Heart right ventricle (tissue), 16 donors: ENCODE measurements at regions of chr14 and their contacts with region 1.

Region 1: DNA sequence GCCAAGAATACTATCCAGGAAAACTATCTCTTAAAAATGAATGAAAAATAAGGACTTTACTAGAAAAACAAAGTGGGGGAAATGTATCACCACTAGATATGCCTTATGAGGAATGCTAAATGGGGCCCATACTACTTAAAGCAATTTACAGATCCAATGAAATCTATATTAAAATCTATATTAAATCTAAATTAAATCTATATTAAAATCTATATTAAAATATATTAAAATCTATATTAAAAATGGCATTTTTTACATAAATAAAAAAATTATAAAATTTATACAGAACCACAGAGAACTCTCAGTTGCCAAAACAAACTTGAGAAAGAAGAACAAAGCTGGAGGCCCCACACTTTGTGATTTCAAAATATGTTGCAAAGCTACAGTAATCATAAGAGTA is 234.5 kb downstream of the RPL10L start:
- DNase-seq: no peak
- ATAC-seq: no peak
- H3K4me3 ChIP-seq: no peak overlapping the region
- H3K27ac ChIP-seq: no peak overlapping the region
- H3K4me1 ChIP-seq: no peaks in the 10 kb centered on the region
- H3K27me3 ChIP-seq: no peaks in the 10 kb centered on the region
- CTCF ChIP-seq: no peak

Region 2: GRCh38 chr14:46384312-46385010 is 32.6 kb before region 1 on chr14:
- intact Hi-C with region 1: loop called in 1 of 10 experiments (anchors 2 kb)
- DNase-seq: no peak
- ATAC-seq: no peak
- H3K4me3 ChIP-seq: no peak overlapping the region
- H3K27ac ChIP-seq: no peak overlapping the region
- H3K4me1 ChIP-seq: no peaks in the 10 kb centered on the region
- H3K27me3 ChIP-seq: no peaks in the 10 kb centered on the region
- CTCF ChIP-seq: no peak